ENCODE measurements at regions of chr17 and their contacts with region 1.

Region 1: DNA sequence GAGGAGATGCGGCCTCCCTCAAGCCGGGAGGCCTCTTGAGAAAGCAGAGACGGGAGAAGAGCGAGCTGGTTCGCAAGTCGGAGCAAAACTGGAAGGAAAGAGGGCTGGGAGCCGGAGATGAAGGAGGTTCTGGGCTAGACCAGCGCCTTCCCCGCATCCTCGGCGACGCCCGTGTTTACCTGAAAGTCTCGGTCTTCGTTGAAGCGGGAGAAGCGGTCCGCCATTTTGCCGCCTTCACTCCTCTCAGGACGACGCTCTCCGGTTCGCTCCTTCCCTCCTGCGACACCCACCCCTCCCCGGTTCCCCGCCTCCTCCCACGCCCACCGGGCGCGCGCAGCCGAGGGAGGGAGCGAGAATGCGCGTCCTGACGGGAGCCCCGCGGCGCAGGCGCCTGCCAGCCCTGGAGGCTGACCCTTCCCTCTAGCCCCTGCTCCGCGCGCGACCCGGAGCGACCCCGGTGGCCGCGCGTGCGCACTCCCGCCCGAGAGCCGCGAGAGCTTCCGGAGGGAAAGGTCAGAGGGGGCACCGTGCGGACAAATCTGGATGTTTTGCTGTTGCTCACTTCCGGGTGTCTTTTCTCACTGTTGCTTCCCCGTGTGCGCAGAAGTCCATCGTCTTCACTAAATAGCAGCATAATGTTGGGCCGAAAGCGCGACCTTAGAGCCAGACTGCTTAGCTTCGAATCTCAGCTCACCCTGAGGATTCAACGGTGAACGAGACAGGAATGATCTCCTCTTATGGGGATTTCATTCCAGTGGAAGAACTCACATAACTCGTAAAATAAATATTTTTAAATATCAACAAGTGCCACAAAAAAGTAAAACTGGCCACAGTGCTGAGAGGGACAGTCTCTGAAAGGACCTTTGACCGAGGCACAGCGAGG is at the start of gene GPATCH8:
- DNase-seq: peak; percentile 91 to 94
- ATAC-seq: peak; percentile 88 to 90
- H3K4me3 ChIP-seq: peak within 1 kb of the TSS; percentile 86 to 99 (median 87)
- H3K27ac ChIP-seq: peak within 1 kb of the TSS; percentile 92 to 99 (median 96)
- H3K4me1 ChIP-seq: peaks cover 35 to 39% of the 10 kb centered on the region in 2 donors
- H3K27me3 ChIP-seq: no peaks in the 10 kb centered on the region
- CTCF ChIP-seq: no peak
- POLR2A ChIP-seq: peak; percentile 80 to 88
- total RNA-seq, gene GPATCH8: 39.9 to 75.1 (median 50.8) TPM

Region 2: DNA sequence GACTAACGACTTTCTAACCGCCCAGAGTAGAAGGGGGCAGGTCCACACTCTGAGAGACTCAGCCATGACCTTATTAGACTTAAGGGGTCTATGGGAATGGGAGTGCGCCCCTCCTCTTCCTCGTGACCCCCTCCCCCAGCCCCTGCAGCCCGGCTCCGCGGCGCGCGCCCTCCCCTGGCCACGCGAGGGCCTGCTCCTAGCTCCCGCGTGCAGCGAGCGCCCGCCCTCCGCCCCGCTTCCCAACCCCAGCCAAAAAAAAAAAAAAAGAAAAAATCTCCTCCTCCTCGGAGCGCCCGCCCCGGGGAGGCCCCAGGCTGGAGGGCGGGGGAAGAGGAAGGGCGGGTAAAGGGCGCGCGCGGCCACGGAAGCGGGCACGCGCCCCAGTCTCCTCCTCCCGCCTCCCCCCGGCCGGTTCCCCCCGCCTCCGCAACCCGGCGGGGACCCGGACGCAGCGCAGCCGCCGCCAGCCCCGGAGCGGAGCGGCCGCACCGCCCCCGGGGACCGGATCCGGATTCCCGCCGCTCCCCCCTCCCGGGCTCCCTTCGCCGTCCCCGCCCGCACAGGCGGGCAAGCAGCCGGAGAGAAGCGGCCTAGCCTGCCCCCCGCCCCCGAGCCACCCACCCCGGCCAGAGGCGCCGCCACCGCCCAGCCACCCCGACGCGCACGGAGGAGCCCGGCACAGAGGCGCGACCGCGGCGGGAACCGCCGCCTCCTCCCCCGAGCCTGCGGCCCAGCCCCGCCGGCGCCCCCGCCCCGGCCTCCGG is 284.9 kb before region 1 on chr17:
- in situ Hi-C with region 1: loop called in 3 of 4 experiments (anchors 25 kb)
- intact Hi-C with region 1: loop called (anchors 5 kb)
- DNase-seq: peak; percentile 84 to 87
- ATAC-seq: peak; percentile 45 to 59
- H3K4me3 ChIP-seq: peak overlapping the region; percentile 51 to 93 (median 63)
- H3K27ac ChIP-seq: peak overlapping the region; percentile 95 to 100 (median 98)
- H3K4me1 ChIP-seq: peaks cover 46 to 55% of the 10 kb centered on the region in 2 donors
- H3K27me3 ChIP-seq: no peaks in the 10 kb centered on the region
- CTCF ChIP-seq: peak; percentile 35 to 72 (median 62)
- POLR2A ChIP-seq: peak; percentile 70 to 81

Region 3: DNA sequence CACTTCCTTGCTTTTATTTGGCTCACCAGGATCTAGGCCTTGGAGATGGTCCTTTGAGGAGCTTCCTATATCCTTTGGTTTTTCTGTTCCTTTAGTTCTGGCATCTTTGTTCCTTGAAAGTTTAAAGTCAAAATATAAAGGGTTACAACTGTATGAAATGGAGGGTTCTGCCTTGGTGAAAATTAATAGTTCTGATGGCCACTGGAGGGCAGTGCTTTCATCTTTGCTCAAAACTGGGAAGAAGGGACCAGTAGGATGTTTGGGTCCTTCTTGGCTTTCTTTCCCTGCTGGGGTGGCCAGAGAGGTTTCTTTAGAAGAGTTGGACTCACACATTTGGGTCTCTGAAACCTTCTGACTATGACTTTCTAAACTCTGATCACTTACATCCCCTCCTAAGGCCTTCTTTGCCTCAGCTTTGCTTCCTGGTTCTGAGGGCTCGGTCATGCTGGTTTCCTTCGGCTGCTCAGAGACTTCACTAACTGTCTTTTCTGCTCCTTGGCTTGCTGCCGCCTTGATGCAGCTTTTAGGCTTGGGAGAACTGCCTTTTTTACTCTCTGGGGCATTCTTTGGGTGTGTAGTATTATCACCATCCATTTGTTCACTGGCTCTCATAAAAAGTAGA is 103.1 kb before region 1 on chr17:
- in situ Hi-C with region 1: loop called in 2 of 4 experiments (anchors 10 kb)
- intact Hi-C with region 1: loop called (anchors 5 kb)
- DNase-seq: no peak
- ATAC-seq: peak in 1 of 2 donors; percentile 47
- H3K4me3 ChIP-seq: no peak overlapping the region
- H3K27ac ChIP-seq: peak overlapping the region in 2 of 4 donors; percentile 10 to 25
- H3K4me1 ChIP-seq: no peaks in the 10 kb centered on the region
- H3K27me3 ChIP-seq: no peaks in the 10 kb centered on the region
- CTCF ChIP-seq: peak; percentile 35 to 57 (median 53)
- POLR2A ChIP-seq: no peak

Region 4: DNA sequence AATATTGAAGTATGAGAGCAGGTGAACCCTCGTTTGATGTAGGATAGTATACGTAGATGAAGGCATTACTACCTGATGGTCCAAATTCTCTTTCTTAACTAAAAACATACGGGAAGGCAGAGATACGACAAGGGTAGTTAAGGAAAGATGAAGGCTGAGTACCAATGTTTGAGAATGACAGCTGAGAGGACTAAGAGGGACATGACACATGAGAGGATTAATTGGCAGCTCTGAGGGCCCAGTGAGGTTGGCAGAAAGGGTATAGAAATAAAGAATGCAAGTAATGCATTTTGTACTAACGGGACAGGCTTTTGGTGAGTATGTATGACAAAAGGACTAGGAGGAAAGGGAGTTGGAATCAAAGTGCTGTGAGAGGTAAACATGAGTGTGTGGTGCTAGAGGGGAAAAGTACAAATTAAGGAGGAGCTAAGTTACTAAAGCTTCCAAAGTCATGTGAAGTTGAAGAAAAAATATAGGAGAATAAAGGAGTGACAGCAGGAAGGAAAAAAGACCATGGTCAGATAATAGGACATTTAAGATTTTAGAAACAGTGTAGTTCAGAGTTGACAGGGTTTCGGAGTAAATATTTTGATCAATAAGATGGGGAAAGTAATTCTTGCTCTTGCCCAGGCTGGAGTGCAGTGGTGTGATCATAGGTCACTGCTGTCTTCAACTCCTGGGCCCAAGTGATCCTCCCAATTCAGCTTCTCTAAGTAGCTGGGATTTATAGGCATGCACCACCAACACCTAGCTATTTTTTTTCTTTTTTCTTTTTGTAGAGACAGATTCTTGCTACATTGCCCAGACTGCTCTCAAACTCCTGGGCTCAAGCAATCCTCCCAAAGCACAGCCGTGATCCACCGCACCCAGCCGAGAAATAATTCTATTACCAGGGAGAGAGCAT is 70.9 kb before region 1 on chr17:
- in situ Hi-C with region 1: no loop called
- intact Hi-C with region 1: loop called (anchors 2 kb)
- DNase-seq: no peak
- ATAC-seq: peak; percentile 59 to 77
- H3K4me3 ChIP-seq: no peak overlapping the region
- H3K27ac ChIP-seq: peak overlapping the region; percentile 84 to 94 (median 89)
- H3K4me1 ChIP-seq: peaks cover 45 to 47% of the 10 kb centered on the region in 2 donors
- H3K27me3 ChIP-seq: no peaks in the 10 kb centered on the region
- CTCF ChIP-seq: no peak
- POLR2A ChIP-seq: no peak

Region 5: DNA sequence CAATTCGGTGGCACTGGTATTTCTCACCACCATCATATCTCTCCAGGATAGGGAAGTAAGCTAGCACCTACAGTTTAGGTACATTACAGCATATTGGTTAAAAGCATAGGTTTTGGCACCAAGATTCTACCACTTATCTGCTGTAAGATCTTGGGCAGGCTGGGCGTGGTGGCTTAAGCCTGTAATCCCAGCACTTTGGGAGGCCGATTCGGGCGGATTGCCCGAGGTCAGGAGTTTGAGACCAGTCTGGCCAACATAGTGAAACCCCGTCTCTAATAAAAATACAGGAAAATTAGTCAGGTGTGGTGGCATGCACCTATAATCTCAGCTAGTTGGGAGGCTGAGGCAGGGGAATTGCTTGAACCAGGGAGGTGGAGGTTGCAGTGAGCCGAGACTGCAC is 51.6 kb before region 1 on chr17:
- in situ Hi-C with region 1: no loop called
- intact Hi-C with region 1: no loop called
- DNase-seq: no peak
- ATAC-seq: no peak
- H3K4me3 ChIP-seq: no peak overlapping the region
- H3K27ac ChIP-seq: no peak overlapping the region
- H3K4me1 ChIP-seq: no peaks in the 10 kb centered on the region
- H3K27me3 ChIP-seq: no peaks in the 10 kb centered on the region
- CTCF ChIP-seq: no peak
- POLR2A ChIP-seq: no peak

Region 6: GRCh38 chr17:44693609-44694008 is 190.2 kb after region 1 on chr17:
- in situ Hi-C with region 1: no loop called
- intact Hi-C with region 1: no loop called
- DNase-seq: no peak
- ATAC-seq: no peak
- H3K4me3 ChIP-seq: no peak overlapping the region
- H3K27ac ChIP-seq: no peak overlapping the region
- H3K4me1 ChIP-seq: peaks cover 7 to 8% of the 10 kb centered on the region in 2 donors
- H3K27me3 ChIP-seq: no peaks in the 10 kb centered on the region
- CTCF ChIP-seq: no peak
- POLR2A ChIP-seq: no peak

Measured in gastrocnemius medialis (tissue), 4 donors.